HEK293T (cell line): ENCODE measurements at regions of chr1 and their contacts with region 1.

Region 1: DNA sequence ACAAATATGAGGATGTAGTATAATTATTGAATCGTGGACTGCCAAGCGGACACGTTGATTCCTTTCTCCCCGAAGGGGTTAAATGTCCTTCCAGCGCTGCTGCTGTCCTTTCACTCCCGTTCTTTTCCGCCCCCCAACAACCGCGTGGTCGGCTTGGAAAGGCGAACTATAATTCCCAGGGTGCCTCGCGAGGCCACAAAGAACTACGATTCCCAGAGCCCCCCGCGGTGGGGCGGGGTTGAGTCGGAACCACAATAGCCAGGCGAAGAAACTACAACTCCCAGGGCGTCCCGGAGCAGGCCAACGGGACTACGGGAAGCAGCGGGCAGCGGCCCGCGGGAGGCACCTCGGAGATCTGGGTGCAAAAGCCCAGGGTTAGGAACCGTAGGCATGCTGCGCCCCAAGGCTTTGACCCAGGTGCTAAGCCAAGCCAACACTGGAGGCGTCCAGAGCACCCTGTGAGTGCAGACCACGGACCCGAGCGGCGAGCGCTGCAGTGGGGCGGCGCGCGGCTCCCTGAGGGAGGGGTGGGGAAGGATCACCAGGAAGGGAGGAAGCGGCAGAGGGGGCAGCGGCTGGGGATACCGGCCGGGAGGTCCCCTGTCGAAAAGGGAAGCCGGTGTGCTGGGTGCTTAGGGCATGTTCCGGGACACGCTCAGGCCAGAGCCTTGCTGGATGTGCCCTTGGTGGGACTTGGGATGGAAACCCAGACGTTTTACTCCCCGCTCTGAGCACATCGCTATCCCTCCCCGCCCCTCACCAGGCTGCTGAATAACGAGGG is at the start of gene LAMTOR2:
- DNase-seq: peak; percentile 97

Region 2: DNA sequence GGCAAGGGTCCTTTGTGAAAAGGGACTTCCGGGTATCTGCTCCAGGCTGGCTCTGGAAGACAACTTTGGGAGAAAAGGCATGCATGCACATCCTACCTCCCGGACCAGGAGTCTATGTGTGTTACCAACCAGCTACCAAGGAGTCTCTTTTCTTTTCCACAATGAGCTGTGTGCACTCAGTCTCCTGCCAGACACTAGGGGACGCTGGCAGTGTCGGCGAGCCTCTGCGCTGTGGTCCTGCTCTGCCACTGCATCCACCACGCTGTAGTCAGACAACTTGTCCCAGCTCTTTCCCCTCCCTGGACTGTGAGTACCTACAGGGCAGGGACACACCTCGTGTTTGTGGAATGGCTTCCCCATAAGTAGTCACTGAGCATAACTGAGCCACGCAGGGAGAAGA is 28.8 kb before region 1 on chr1:
- CTCF ChIA-PET with region 1: interaction called, 8 read pairs
- POLR2A ChIA-PET with region 1: interaction called, 11 read pairs
- DNase-seq: peak; percentile 91

Region 3: GRCh38 chr1:156082309-156083091 is 27.8 kb after region 1 on chr1 and contains the start of gene MEX3A:
- CTCF ChIA-PET with region 1: no interaction called
- POLR2A ChIA-PET with region 1: interaction called, 11 read pairs
- DNase-seq: peak; percentile 88